ENCODE measurements at regions of chr15 and their contacts with region 1.

Region 1: GRCh38 chr15:60585743-60586708 is 107.1 kb upstream of the ICE2 start:
- DNase-seq: peak; percentile 74
- ATAC-seq: peak; percentile 70
- H3K4me3 ChIP-seq: no peak overlapping the region
- H3K27ac ChIP-seq: no peak overlapping the region
- H3K4me1 ChIP-seq: no peaks in the 10 kb centered on the region
- H3K27me3 ChIP-seq: peaks cover 62% of the 10 kb centered on the region
- CTCF ChIP-seq: peak; percentile 91

Region 2: GRCh38 chr15:60507596-60508424 is 78.2 kb before region 1 on chr15:
- CTCF ChIA-PET with region 1: no interaction called
- POLR2A ChIA-PET with region 1: no interaction called
- intact Hi-C with region 1: loop called (anchors 2 kb)
- DNase-seq: peak; percentile 72
- ATAC-seq: peak; percentile 79
- H3K4me3 ChIP-seq: peak overlapping the region; percentile 68
- H3K27ac ChIP-seq: no peak overlapping the region
- H3K4me1 ChIP-seq: peaks cover 25% of the 10 kb centered on the region
- H3K27me3 ChIP-seq: no peaks in the 10 kb centered on the region
- CTCF ChIP-seq: peak; percentile 89

Region 3: GRCh38 chr15:60548101-60548500 is 37.9 kb before region 1 on chr15:
- CTCF ChIA-PET with region 1: no interaction called
- POLR2A ChIA-PET with region 1: no interaction called
- intact Hi-C with region 1: no loop called
- DNase-seq: no peak
- ATAC-seq: no peak
- H3K4me3 ChIP-seq: no peak overlapping the region
- H3K27ac ChIP-seq: no peak overlapping the region
- H3K4me1 ChIP-seq: no peaks in the 10 kb centered on the region
- H3K27me3 ChIP-seq: no peaks in the 10 kb centered on the region
- CTCF ChIP-seq: no peak

Region 4: DNA sequence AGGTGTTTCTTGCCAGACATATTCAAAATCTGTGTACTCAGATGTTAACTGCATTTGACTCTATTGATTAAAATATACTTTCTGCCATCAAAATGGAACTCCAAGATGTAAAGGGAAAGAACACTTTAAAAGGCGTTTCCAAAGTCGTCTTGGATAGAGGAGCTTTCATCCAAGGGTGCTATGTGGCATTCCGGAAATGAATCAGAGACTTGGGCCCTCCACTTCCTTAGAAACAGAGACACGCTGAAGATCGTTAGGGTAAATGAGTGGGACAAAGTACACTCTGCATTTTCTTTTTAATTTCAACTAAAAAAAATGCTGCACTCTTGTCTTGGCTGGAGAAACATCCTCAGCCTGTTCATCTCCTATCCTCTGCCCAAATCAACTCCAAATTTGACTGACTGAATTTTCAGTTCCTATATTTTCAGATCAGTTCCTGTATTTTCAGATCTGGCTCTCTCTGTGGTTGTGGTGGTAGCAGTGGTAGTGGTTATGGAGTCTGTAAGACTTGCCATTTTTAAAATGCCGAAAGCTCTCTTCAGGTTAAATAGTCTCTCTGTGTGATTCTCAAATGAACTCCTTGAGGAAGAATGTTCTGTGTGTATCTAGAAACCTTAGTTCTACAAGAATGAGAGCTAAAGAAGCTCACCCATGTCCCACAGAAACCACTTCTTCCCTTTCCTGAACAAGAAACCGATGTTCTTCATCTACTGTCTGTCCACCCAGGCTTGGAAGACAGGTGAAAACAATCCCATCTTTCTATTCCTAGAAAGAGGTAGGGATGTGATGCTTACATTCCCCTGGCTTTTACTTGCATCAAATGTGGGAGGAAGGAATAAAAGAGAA is 49.7 kb after region 1 on chr15:
- CTCF ChIA-PET with region 1: no interaction called
- POLR2A ChIA-PET with region 1: no interaction called
- intact Hi-C with region 1: no loop called
- DNase-seq: no peak
- ATAC-seq: no peak
- H3K4me3 ChIP-seq: no peak overlapping the region
- H3K27ac ChIP-seq: no peak overlapping the region
- H3K4me1 ChIP-seq: no peaks in the 10 kb centered on the region
- H3K27me3 ChIP-seq: peaks cover 75% of the 10 kb centered on the region
- CTCF ChIP-seq: no peak

Region 5: GRCh38 chr15:60916679-60917460 is 330.8 kb after region 1 on chr15:
- CTCF ChIA-PET with region 1: interaction called, 4 read pairs
- POLR2A ChIA-PET with region 1: no interaction called
- intact Hi-C with region 1: loop called (anchors 1 kb)
- DNase-seq: peak; percentile 68
- ATAC-seq: peak; percentile 75
- H3K4me3 ChIP-seq: no peak overlapping the region
- H3K27ac ChIP-seq: no peak overlapping the region
- H3K4me1 ChIP-seq: no peaks in the 10 kb centered on the region
- H3K27me3 ChIP-seq: peaks cover 29% of the 10 kb centered on the region; the same call in 1 of the 2 replicates
- CTCF ChIP-seq: peak; percentile 74

Region 6: DNA sequence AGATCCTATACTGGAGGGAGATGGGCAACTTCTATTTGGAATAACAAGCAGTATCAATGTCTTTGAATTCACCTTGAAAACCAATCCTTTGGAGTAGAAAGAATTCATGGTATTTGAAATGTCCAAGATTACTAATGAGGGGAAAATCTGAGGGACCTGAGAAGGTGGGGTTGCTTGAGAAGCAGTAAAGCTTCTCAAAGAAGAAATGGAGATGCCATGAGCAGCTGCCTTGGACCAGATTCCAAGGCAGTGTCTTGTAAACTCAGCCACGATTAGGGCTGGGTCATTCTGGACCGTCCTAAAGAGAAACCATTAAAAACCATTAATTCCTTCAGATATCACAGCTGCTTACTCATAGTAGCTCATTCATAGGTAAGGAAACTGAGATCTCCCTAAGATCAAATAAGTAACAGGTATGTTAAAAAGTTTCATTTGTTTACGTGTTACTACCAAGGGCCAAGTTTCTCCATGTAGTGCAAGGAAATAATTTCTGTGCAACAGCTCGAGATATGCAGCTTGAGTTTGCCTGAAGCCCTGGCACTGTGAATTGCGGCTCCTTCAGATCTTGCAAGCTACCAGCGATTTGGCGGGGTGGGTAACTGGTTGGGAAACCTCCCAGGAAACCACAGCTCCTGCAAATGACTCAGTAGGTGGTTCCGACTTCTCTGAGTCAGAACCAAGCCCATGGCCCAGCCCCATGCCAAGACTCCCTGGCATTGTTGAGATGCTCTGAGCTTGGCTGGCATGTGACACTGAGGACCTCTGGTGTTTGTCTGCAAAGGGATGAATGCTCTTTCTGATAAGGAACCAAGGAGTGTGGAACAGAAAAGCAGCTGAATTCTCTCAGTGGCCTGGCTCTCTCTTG is 346.3 kb after region 1 on chr15:
- CTCF ChIA-PET with region 1: interaction called, 3 read pairs
- POLR2A ChIA-PET with region 1: no interaction called
- intact Hi-C with region 1: loop called (anchors 5 kb)
- DNase-seq: peak; percentile 88
- ATAC-seq: peak; percentile 94
- H3K4me3 ChIP-seq: no peak overlapping the region
- H3K27ac ChIP-seq: peak overlapping the region; percentile 21; the same call in 1 of the 2 replicates
- H3K4me1 ChIP-seq: peaks cover 16% of the 10 kb centered on the region
- H3K27me3 ChIP-seq: no peaks in the 10 kb centered on the region; the same call in 1 of the 2 replicates
- CTCF ChIP-seq: peak; percentile 65

Region 7: GRCh38 chr15:61051569-61052031 is 465.6 kb after region 1 on chr15:
- CTCF ChIA-PET with region 1: no interaction called
- POLR2A ChIA-PET with region 1: no interaction called
- intact Hi-C with region 1: loop called (anchors 2 kb)
- DNase-seq: peak; percentile 20
- ATAC-seq: peak; percentile 48
- H3K4me3 ChIP-seq: no peak overlapping the region
- H3K27ac ChIP-seq: no peak overlapping the region
- H3K4me1 ChIP-seq: peaks cover 16% of the 10 kb centered on the region
- H3K27me3 ChIP-seq: peaks cover 28% of the 10 kb centered on the region
- CTCF ChIP-seq: peak; percentile 60

Region 8: GRCh38 chr15:61834076-61834697 is 1248.2 kb after region 1 on chr15:
- CTCF ChIA-PET with region 1: interaction called, 4 read pairs
- POLR2A ChIA-PET with region 1: no interaction called
- intact Hi-C with region 1: loop called (anchors 2 kb)
- DNase-seq: peak; percentile 83
- ATAC-seq: peak; percentile 79
- H3K4me3 ChIP-seq: no peak overlapping the region
- H3K27ac ChIP-seq: no peak overlapping the region
- H3K4me1 ChIP-seq: no peaks in the 10 kb centered on the region
- H3K27me3 ChIP-seq: no peaks in the 10 kb centered on the region
- CTCF ChIP-seq: peak; percentile 88

Measured in PC-3 (cell line).